Activated CD4-positive, alpha-beta T cell treated with anti-CD3 and anti-CD28 coated beads, Interleukin-2, amount 10 ng/mL, durations not matched to agents 24 days and 14 days (primary cell): ENCODE measurements at regions of chr14 and their contacts with region 1.

Region 1: GRCh38 chr14:102516531-102517415 is 7.2 kb upstream of the ANKRD9 start:
- DNase-seq: peak; percentile 93
- H3K4me3 Mint-ChIP-seq: peak overlapping the region; percentile 82
- H3K27ac Mint-ChIP-seq: peak overlapping the region; percentile 68
- H3K4me1 Mint-ChIP-seq: peaks cover 4% of the 10 kb centered on the region
- H3K27me3 Mint-ChIP-seq: peaks cover 10% of the 10 kb centered on the region

Region 2: DNA sequence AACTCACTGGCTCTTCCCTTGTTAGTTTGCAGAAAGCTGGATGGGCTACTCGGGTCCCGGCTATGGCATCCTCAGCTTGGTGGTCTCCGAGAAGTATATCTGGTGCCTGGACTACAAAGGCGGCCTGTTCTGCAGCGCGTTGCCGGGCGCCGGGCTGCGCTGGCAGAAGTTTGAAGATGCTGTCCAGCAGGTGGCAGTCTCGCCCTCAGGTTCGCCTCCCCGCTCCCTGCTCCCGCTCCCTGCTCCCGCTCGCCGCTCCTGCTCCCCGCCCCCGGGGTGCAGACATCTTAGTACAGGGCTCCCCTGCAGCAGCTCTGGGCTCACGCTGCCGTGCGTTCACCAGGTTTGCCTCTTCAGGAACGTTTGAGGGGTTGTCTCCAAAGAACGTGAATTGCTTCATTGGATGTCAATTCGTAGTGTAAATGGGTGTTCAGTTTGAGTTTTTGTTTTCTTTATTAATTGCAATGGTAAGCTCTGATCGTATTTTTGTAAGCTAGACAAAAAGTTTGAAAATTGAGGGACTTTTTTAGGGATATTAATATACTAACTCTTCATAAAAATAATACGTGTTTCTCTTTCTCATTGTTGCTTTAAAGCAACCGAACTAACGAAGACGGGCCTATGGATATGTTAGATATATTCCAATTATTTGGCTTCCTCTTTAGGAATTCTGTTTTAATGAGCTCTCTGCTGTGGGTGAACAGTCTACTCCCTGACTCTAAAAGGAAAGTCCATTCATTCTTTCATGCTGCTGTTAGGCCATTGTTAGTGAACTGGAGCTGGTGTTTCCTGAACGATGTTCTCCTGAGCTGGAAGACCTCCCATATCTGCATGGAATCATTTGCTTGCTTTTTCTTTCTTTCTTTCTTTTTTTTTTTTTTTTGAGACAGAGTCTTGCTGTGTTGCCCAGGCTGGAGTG is 78.5 kb before region 1 on chr14:
- intact Hi-C with region 1: loop called (anchors 1 kb)
- DNase-seq: peak; percentile 92
- H3K4me3 Mint-ChIP-seq: peak overlapping the region; percentile 43
- H3K27ac Mint-ChIP-seq: no peak overlapping the region
- H3K4me1 Mint-ChIP-seq: peaks cover 3% of the 10 kb centered on the region
- H3K27me3 Mint-ChIP-seq: no peaks in the 10 kb centered on the region